Activated CD4-positive, alpha-beta T cell treated with anti-CD3 and anti-CD28 coated beads, Interleukin-2, amount 10 ng/mL, durations not matched to agents 24 days and 14 days (primary cell): ENCODE measurements at regions of chr10 and their contacts with region 1.

Region 1: GRCh38 chr10:109934958-109935706 is 11.8 kb upstream of the XPNPEP1 start:
- DNase-seq: peak; percentile 74
- H3K4me3 Mint-ChIP-seq: peak overlapping the region; percentile 82
- H3K27ac Mint-ChIP-seq: peak overlapping the region; percentile 96
- H3K4me1 Mint-ChIP-seq: peaks cover 21% of the 10 kb centered on the region
- H3K27me3 Mint-ChIP-seq: no peaks in the 10 kb centered on the region

Region 2: GRCh38 chr10:109902934-109903589 is 32.1 kb before region 1 on chr10:
- intact Hi-C with region 1: loop called (anchors 2 kb)
- DNase-seq: peak; percentile 67
- H3K4me3 Mint-ChIP-seq: peak overlapping the region; percentile 58
- H3K27ac Mint-ChIP-seq: peak overlapping the region; percentile 81
- H3K4me1 Mint-ChIP-seq: peaks cover 57% of the 10 kb centered on the region
- H3K27me3 Mint-ChIP-seq: no peaks in the 10 kb centered on the region

Region 3: GRCh38 chr10:109956454-109957091 is 21.4 kb after region 1 on chr10:
- intact Hi-C with region 1: loop called (anchors 2 kb)
- DNase-seq: peak; percentile 69
- H3K4me3 Mint-ChIP-seq: no peak overlapping the region
- H3K27ac Mint-ChIP-seq: no peak overlapping the region
- H3K4me1 Mint-ChIP-seq: peaks cover 2% of the 10 kb centered on the region
- H3K27me3 Mint-ChIP-seq: peaks cover 19% of the 10 kb centered on the region

Region 4: DNA sequence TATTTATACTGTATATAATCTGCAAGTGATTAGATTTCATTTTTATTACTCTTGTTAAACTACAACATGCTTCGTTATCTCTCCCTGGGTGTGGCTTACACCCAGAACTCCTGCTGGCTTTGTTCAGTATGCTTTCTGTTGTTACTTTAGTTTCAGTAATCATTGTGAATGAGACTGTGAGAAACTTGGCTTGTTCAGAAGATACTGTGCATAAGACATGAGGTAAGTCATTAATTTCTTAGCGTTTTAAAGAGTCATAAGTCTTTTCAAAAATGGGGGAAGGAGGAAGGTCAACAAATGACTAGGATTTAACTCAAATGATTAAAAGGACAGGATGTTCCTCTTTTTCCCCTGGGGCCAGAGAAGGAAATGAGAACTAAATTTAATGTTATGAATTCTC is 61.1 kb after region 1 on chr10:
- intact Hi-C with region 1: loop called (anchors 5 kb)
- DNase-seq: no peak
- H3K4me3 Mint-ChIP-seq: no peak overlapping the region
- H3K27ac Mint-ChIP-seq: no peak overlapping the region
- H3K4me1 Mint-ChIP-seq: peaks cover 7% of the 10 kb centered on the region
- H3K27me3 Mint-ChIP-seq: peaks cover 4% of the 10 kb centered on the region

Region 5: GRCh38 chr10:110007701-110008517 is 72.8 kb after region 1 on chr10 and contains the start of gene ADD3:
- intact Hi-C with region 1: no loop called
- DNase-seq: peak; percentile 95
- H3K4me3 Mint-ChIP-seq: no peak within 1 kb of the TSS
- H3K27ac Mint-ChIP-seq: peak within 1 kb of the TSS; percentile 94
- H3K4me1 Mint-ChIP-seq: peaks cover 40% of the 10 kb centered on the region
- H3K27me3 Mint-ChIP-seq: peaks cover 4% of the 10 kb centered on the region
- total RNA-seq, gene ADD3: 28.4 and 28.9 TPM in 2 replicates